ENCODE measurements at regions of chr3 and their contacts with region 1.

Region 1: GRCh38 chr3:157103280-157103679 is 56.7 kb downstream of the CCNL1 start:
- DNase-seq: peak; percentile 69
- CTCF ChIP-seq: no peak

Region 2: DNA sequence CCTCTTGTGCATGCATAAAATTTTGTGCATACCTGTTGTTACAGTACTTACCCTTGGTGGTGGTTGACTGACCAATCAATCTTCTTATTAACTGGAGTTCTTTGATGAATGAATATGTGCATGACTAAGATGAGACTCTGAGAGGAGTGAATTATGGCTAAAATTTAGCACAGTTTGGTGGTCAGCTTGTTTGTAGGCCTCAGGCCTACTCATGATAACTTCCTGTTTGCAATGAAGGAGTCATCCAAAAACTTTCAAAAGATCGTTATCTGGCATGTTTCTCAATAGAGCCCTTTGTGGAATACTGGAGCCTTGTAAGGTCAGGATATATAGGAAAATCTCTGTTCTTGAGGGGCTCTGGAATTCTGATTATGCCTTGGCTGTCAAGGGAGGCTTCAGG is 210.6 kb before region 1 on chr3:
- CTCF ChIA-PET with region 1: no interaction called
- POLR2A ChIA-PET with region 1: no interaction called
- DNase-seq: no peak
- CTCF ChIP-seq: no peak

Region 3: GRCh38 chr3:157088601-157089454 is 14.5 kb before region 1 on chr3:
- CTCF ChIA-PET with region 1: interaction called, 1,428 read pairs
- POLR2A ChIA-PET with region 1: interaction called, 12 read pairs
- DNase-seq: peak; percentile 97
- CTCF ChIP-seq: peak; percentile 4

Region 4: GRCh38 chr3:157311633-157312375 is 208.5 kb after region 1 on chr3:
- CTCF ChIA-PET with region 1: no interaction called
- POLR2A ChIA-PET with region 1: no interaction called
- DNase-seq: no peak
- CTCF ChIP-seq: no peak

Region 5: GRCh38 chr3:158105710-158106253 is 1002.5 kb after region 1 on chr3:
- CTCF ChIA-PET with region 1: no interaction called
- POLR2A ChIA-PET with region 1: no interaction called
- DNase-seq: peak; percentile 20
- CTCF ChIP-seq: no peak

Measured in GM10248 (cell line).